ENCODE measurements at regions of chr19 and their contacts with region 1.

Region 1: GRCh38 chr19:35899547-35900214 is 659 bp downstream of the NFKBID start:
- DNase-seq: peak; percentile 93
- H3K4me3 Mint-ChIP-seq: peak overlapping the region; percentile 92
- H3K27ac Mint-ChIP-seq: peak overlapping the region; percentile 97
- H3K4me1 Mint-ChIP-seq: peaks cover 59% of the 10 kb centered on the region
- H3K27me3 Mint-ChIP-seq: no peaks in the 10 kb centered on the region

Region 2: DNA sequence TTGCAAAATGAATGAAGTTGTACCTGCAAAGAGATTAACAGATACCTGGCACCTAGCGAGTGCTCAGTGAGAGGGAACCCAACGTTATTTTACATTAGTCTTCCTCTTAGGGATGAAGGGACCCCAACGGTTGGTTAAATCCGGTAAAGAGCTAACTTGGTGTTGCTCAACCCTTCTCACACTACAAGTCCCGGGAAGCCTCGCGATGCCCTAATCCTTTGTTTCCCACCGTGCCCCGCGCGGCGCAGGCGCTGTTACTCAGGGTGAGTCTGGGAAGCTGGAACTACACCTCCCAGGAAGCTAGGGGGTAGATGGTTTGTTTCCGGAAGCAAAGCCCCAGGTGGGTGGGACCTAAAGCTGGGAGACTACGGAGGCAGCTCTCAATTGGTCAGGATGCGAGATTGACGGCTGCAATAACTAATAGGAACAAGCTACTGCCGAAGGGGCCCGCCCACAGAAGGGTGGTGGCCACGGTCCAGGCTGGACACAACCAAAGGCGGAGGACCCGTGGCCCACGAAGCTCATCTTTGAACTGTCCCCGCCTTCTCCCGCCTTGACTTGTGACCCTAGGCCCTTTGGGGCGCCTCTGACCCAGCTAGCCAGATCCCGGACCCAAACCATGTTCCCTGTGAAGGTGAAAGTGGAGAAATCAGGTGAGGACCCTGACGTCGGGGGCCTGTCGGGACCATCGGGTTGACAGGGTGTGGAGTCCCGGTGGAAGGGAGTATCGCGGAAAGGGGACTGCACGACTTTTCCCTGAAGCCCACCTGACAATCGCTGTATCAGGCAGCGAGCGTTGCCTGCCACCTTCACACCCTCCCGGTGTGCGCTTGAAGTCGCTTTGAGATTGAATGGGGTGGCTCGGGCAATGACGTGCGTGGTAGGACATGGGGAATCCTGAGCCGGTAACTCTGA is 151.3 kb before region 1 on chr19 and contains the start of gene LIN37:
- CTCF ChIA-PET with region 1: no interaction called
- POLR2A ChIA-PET with region 1: no interaction called
- intact Hi-C with region 1: loop called (anchors 2 kb)
- DNase-seq: peak; percentile 99
- H3K4me3 Mint-ChIP-seq: peak within 1 kb of the TSS; percentile 94
- H3K27ac Mint-ChIP-seq: peak within 1 kb of the TSS; percentile 88
- H3K4me1 Mint-ChIP-seq: peaks cover 42% of the 10 kb centered on the region
- H3K27me3 Mint-ChIP-seq: no peaks in the 10 kb centered on the region
- total RNA-seq, gene LIN37: 7.5 TPM